CD4-positive, alpha-beta T cell (primary cell): ENCODE measurements at regions of chr6 and their contacts with region 1.

Region 1: DNA sequence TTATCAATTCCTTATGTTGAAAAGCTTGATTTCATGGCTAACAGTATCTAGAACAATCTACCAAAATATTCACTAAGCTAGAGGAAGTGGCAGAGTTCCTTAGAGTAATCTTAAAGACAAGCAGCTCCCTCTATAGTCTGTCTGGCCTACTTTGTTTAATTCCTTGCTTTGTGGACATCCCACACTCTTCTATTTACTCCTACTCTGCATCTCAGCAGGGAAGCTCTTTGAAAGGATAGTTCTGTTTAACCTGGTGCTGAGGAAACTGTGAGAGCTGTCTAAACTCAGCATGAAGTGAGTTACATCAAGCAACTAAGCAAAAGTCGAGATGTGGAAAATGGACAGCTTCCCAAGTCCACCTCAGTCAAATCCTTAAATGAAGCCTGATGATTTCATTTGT is 4.3 kb downstream of the REV3L start:
- DNase-seq: peak in 3 of 14 experiments; percentile 65 to 71 (median 70)
- ATAC-seq: peak; percentile 24
- H3K4me3 ChIP-seq: no peak overlapping the region
- H3K4me3 Mint-ChIP-seq: peak overlapping the region; percentile 54
- H3K27ac ChIP-seq: no peak overlapping the region
- H3K27ac Mint-ChIP-seq: peak overlapping the region; percentile 73
- H3K4me1 ChIP-seq: peaks cover 7% of the 10 kb centered on the region
- H3K4me1 Mint-ChIP-seq: peaks cover 52% of the 10 kb centered on the region
- H3K27me3 ChIP-seq: no peaks in the 10 kb centered on the region
- H3K27me3 Mint-ChIP-seq: no peaks in the 10 kb centered on the region
- CTCF ChIP-seq: peak; percentile 57

Region 2: GRCh38 chr6:111361648-111362047 is 117.1 kb before region 1 on chr6:
- CTCF ChIA-PET with region 1: interaction called, 12 read pairs
- POLR2A ChIA-PET with region 1: no interaction called
- intact Hi-C with region 1: loop called (anchors 5 kb)
- DNase-seq: peak in 3 of 14 experiments; percentile 20 to 32 (median 21)
- ATAC-seq: no peak
- H3K4me3 ChIP-seq: no peak overlapping the region
- H3K4me3 Mint-ChIP-seq: no peak overlapping the region
- H3K27ac ChIP-seq: no peak overlapping the region
- H3K27ac Mint-ChIP-seq: no peak overlapping the region
- H3K4me1 ChIP-seq: no peaks in the 10 kb centered on the region
- H3K4me1 Mint-ChIP-seq: no peaks in the 10 kb centered on the region
- H3K27me3 ChIP-seq: no peaks in the 10 kb centered on the region
- H3K27me3 Mint-ChIP-seq: no peaks in the 10 kb centered on the region
- CTCF ChIP-seq: peak; percentile 23

Region 3: DNA sequence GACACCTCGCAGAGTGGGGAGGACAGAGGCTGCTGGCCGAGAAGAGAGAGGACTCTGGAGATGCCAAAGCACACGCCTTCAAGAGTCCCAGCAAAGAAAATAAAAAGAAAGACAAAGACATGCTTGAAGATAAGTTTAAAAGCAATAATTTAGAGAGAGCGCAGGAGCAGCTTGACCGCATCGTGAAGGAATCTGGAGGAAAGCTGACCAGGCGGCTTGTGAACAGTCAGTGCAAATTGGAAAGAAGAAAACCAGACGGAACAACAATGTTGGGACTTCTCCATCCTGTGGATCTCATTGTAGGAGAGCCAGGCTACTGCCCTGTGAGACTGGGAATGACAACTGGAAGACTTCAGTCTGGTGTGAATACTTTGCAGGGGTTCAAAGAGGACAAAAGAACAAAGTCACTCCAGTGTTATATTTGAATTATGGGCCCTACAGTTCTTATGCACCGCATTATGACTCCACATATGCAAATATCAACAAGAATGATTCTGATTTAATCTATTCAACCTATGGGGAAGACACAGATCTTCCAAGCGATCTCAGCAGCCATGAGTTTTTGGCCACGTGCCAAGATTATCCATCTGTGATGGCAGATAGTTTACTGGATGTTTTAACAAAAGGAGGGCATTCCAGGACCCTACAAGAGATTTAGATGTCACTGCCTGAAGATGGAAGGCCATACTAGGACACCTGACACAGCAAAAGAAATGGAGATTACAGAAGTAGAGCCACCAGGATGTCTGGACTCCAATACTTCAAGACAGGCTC is 48.0 kb before region 1 on chr6:
- CTCF ChIA-PET with region 1: interaction called, 3 read pairs
- POLR2A ChIA-PET with region 1: no interaction called
- intact Hi-C with region 1: loop called in 1 of 2 experiments (anchors 5 kb)
- DNase-seq: no peak
- ATAC-seq: no peak
- H3K4me3 ChIP-seq: no peak overlapping the region
- H3K4me3 Mint-ChIP-seq: no peak overlapping the region
- H3K27ac ChIP-seq: no peak overlapping the region
- H3K27ac Mint-ChIP-seq: no peak overlapping the region
- H3K4me1 ChIP-seq: peaks cover 6% of the 10 kb centered on the region
- H3K4me1 Mint-ChIP-seq: peaks cover 62% of the 10 kb centered on the region
- H3K27me3 ChIP-seq: no peaks in the 10 kb centered on the region
- H3K27me3 Mint-ChIP-seq: no peaks in the 10 kb centered on the region
- CTCF ChIP-seq: no peak